Posterior vena cava (tissue), 2 donors: ENCODE measurements at regions of chr22 and their contacts with region 1.

Region 1: DNA sequence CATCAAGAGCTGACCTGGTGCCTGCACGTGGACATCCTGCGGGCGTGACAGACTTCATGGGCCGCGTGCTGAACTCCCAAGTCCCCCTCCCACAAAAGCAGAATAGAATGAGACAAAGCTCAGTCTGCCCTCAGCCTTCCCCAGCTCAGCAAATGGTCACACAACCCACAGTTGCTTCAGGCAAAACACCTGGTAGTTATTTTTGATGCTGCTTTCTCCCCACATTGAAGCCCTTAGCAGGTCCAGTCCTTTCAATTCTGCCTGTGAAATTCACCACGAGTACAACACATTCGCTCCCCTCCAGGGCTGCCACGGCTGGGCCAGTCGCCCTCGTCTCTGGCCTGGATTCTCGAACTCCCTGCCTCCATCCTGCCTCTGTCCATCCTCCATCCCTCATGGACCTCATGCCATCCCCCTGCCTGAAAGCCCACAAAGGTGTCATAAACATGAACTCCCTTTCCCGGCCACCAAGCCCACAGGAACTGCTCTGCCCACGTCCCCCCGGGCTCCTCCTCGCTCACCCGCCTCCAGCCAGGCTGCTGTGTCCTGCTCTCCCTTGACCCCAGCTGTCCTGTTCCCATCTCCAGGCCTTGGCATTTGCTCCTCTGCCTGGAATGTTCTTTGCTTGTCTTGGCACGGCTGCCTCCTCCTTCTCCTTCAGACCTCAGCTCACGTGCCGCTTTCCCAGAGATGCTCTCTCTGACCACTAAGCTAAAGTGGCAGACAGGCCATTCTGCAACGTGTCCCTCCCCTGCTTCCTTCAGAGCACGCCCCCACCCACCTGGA is 42.1 kb downstream of the SCUBE1 start:
- DNase-seq: no peak

Region 2: DNA sequence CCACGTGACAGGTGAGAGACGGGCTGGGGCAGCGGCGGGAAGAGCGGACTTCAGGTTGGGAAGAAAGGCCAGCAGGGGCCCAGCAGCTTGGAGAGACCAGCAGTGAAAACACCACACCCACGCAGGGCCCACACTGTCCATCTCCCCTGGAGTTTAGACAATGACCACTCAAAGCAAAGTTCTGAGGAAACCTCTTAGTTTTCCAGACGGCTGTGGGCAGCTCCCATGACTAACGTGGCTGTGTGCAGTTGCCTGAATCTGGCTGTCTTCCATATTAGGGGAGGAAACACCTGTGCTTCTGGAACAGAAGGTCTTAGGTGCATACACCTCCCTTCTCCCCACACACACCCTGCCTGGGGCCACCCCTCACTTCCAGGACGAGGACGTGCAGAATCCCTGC is 43.5 kb before region 1 on chr22:
- intact Hi-C with region 1: loop called in 1 of 2 experiments (anchors 5 kb)
- DNase-seq: no peak

Region 3: DNA sequence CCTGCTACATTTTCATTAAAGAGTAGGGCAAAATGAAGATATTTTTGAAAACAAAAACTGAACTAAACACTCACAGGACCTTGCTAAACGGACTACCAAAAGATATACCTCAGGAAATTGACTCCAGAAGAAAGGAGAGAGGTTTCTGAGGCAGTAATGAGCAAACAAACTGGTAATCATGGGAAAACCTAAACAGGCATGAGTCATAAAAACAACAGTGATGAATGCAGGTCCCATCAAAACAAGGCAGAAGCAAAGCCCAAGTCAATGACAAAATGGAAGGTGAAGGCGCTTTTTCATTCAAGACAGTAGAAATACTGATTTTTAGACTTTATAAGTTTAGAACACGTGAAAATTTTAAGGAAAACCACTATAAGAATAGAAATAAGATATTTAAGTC is 406.6 kb after region 1 on chr22:
- intact Hi-C with region 1: no loop called
- DNase-seq: no peak